Activated CD4-positive, alpha-beta T cell treated with anti-CD3 and anti-CD28 coated beads for 36 hours (primary cell): ENCODE measurements at regions of chr2 and their contacts with region 1.

Region 1: GRCh38 chr2:20650880-20651730 is at the start of gene HS1BP3:
- DNase-seq: peak; percentile 92
- ATAC-seq: peak; percentile 97
- H3K4me3 Mint-ChIP-seq: peak within 1 kb of the TSS; percentile 78
- H3K27ac Mint-ChIP-seq: peak within 1 kb of the TSS; percentile 86
- H3K4me1 Mint-ChIP-seq: peaks cover 22% of the 10 kb centered on the region
- H3K27me3 Mint-ChIP-seq: no peaks in the 10 kb centered on the region
- total RNA-seq, gene HS1BP3: 6.2 to 7.1 TPM

Region 2: GRCh38 chr2:19989681-19990415 is 661.3 kb before region 1 on chr2 and contains the start of gene WDR35:
- CTCF ChIA-PET with region 1: no interaction called
- POLR2A ChIA-PET with region 1: no interaction called
- intact Hi-C with region 1: loop called in 1 of 2 experiments (anchors 5 kb)
- DNase-seq: peak; percentile 95
- ATAC-seq: peak; percentile 97
- H3K4me3 Mint-ChIP-seq: peak within 1 kb of the TSS; percentile 90
- H3K27ac Mint-ChIP-seq: peak within 1 kb of the TSS; percentile 75
- H3K4me1 Mint-ChIP-seq: peaks cover 28% of the 10 kb centered on the region
- H3K27me3 Mint-ChIP-seq: peaks cover 12% of the 10 kb centered on the region
- total RNA-seq, gene WDR35: 6.2 to 7.4 TPM

Region 3: GRCh38 chr2:20424300-20425290 is 226.5 kb before region 1 on chr2:
- CTCF ChIA-PET with region 1: no interaction called
- POLR2A ChIA-PET with region 1: no interaction called
- intact Hi-C with region 1: no loop called
- DNase-seq: peak; percentile 36
- ATAC-seq: peak; percentile 38
- H3K4me3 Mint-ChIP-seq: no peak overlapping the region
- H3K27ac Mint-ChIP-seq: peak overlapping the region; percentile 34
- H3K4me1 Mint-ChIP-seq: peaks cover 16% of the 10 kb centered on the region
- H3K27me3 Mint-ChIP-seq: peaks cover 3% of the 10 kb centered on the region

Region 4: GRCh38 chr2:20446917-20447436 is 204.1 kb before region 1 on chr2 and contains the start of gene RHOB:
- CTCF ChIA-PET with region 1: interaction called, 21 read pairs
- POLR2A ChIA-PET with region 1: interaction called, 9 read pairs
- intact Hi-C with region 1: loop called (anchors 1 kb)
- DNase-seq: peak; percentile 93
- ATAC-seq: peak; percentile 99
- H3K4me3 Mint-ChIP-seq: peak within 1 kb of the TSS; percentile 71
- H3K27ac Mint-ChIP-seq: no peak within 1 kb of the TSS
- H3K4me1 Mint-ChIP-seq: no peaks in the 10 kb centered on the region
- H3K27me3 Mint-ChIP-seq: peaks cover 23% of the 10 kb centered on the region
- total RNA-seq, gene RHOB: 7.5 TPM

Region 5: GRCh38 chr2:20666304-20667150 is 15.4 kb after region 1 on chr2 and contains the start of gene GDF7:
- CTCF ChIA-PET with region 1: interaction called, 36 read pairs
- POLR2A ChIA-PET with region 1: no interaction called
- intact Hi-C with region 1: loop called in 1 of 2 experiments (anchors 2 kb)
- DNase-seq: peak; percentile 41
- ATAC-seq: peak; percentile 23
- H3K4me3 Mint-ChIP-seq: peak within 1 kb of the TSS; percentile 69
- H3K27ac Mint-ChIP-seq: no peak within 1 kb of the TSS
- H3K4me1 Mint-ChIP-seq: peaks cover 3% of the 10 kb centered on the region
- H3K27me3 Mint-ChIP-seq: peaks cover 55% of the 10 kb centered on the region
- total RNA-seq, gene GDF7: 0.02 TPM in 1 of 2 experiments, not detected in the other